Ovary (tissue), 10 donors: ENCODE measurements at regions of chr17 and their contacts with region 1.

Region 1: GRCh38 chr17:63029541-63029940 is 63.5 kb downstream of the TANC2 start:
- DNase-seq: no peak
- H3K4me3 ChIP-seq: no peak overlapping the region
- H3K27ac ChIP-seq: no peak overlapping the region
- H3K4me1 ChIP-seq: no peaks in the 10 kb centered on the region
- H3K27me3 ChIP-seq: no peaks in the 10 kb centered on the region
- CTCF ChIP-seq: no peak
- EP300 ChIP-seq: no peak
- POLR2A ChIP-seq: no peak

Region 2: GRCh38 chr17:62819475-62820212 is 209.9 kb before region 1 on chr17:
- intact Hi-C with region 1: no loop called
- DNase-seq: peak in 4 of 5 donors; percentile 40 to 78 (median 56)
- H3K4me3 ChIP-seq: no peak overlapping the region
- H3K27ac ChIP-seq: no peak overlapping the region
- H3K4me1 ChIP-seq: no peaks in the 10 kb centered on the region
- H3K27me3 ChIP-seq: no peaks in the 10 kb centered on the region
- CTCF ChIP-seq: no peak
- EP300 ChIP-seq: no peak
- POLR2A ChIP-seq: no peak

Region 3: DNA sequence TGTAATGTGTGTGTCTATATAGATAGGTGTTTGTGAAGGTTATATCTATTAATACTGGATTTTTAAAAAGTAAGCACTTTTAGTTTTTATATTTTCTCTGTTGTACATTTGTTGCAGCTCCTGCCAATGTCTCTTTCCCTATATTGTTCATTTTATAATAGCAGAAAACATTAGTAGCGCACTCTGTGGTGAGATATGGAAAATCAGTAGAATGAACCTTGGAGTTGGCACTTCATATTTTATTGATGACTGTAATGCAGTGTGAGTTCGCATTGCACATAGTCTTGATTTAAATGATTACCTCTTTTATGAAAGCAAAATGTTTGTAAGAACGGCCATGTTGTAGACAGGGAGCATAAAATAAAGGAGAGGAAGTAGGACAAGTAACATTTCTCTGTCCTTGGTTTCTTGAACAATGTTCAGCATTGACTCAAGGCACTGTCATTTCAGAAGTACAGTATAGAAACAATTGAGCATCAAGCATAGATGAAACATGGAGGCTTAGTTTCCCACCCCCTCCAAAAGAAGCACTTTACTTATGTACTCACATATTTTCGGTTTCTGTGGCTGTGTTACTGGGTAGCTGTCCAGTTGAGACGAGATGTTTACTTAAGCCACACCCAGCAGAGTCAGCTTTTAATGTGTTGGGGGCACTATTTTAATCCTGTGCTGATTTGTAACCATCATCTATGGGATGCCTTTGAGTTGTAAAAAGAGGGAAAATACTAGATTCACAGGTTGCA is 10.5 kb after region 1 on chr17:
- intact Hi-C with region 1: loop called in 1 of 4 experiments (anchors 2 kb)
- DNase-seq: no peak
- H3K4me3 ChIP-seq: peak overlapping the region; percentile 4
- H3K27ac ChIP-seq: no peak overlapping the region
- H3K4me1 ChIP-seq: peaks cover 1% of the 10 kb centered on the region
- H3K27me3 ChIP-seq: no peaks in the 10 kb centered on the region
- CTCF ChIP-seq: no peak
- EP300 ChIP-seq: no peak
- POLR2A ChIP-seq: no peak